WTC11 (cell line): ENCODE measurements at regions of chr1 and their contacts with region 1.

Region 1: DNA sequence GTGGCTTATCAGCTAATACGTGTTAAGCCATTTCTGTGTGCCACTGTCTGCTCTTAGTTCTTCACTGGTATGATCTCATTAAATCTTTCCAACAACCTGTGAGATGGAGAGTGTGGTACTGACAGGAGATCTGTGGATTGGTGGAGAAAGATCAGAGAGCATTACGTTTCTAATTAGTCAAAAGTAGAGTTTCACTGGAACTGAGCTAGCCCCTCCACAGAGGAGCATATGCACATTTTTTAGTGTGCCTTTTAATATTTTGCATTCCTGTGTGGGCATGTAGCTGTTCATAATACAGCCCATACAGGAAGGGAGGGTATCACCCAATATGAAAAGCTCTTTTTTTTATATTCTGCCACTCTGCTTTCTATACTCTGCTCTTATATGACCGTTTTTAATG is 31.6 kb downstream of the UTS2 start:
- DNase-seq: no peak
- ATAC-seq: no peak
- H3K4me3 Mint-ChIP-seq: no peak overlapping the region
- H3K27ac Mint-ChIP-seq: no peak overlapping the region
- H3K4me1 Mint-ChIP-seq: no peaks in the 10 kb centered on the region
- H3K27me3 Mint-ChIP-seq: no peaks in the 10 kb centered on the region
- CTCF ChIP-seq: no peak

Region 2: GRCh38 chr1:7733276-7733675 is 88.0 kb before region 1 on chr1:
- CTCF ChIA-PET with region 1: no interaction called
- POLR2A ChIA-PET with region 1: no interaction called
- DNase-seq: no peak
- ATAC-seq: no peak
- H3K4me3 Mint-ChIP-seq: no peak overlapping the region
- H3K27ac Mint-ChIP-seq: no peak overlapping the region
- H3K4me1 Mint-ChIP-seq: peaks cover 3% of the 10 kb centered on the region
- H3K27me3 Mint-ChIP-seq: no peaks in the 10 kb centered on the region; the same call in 1 of the 2 replicates
- CTCF ChIP-seq: no peak

Region 3: GRCh38 chr1:7808253-7808844 is 12.9 kb before region 1 on chr1:
- CTCF ChIA-PET with region 1: interaction called, 12 read pairs
- POLR2A ChIA-PET with region 1: no interaction called
- DNase-seq: no peak
- ATAC-seq: peak; percentile 36; the same call in 1 of the 2 replicates
- H3K4me3 Mint-ChIP-seq: no peak overlapping the region
- H3K27ac Mint-ChIP-seq: no peak overlapping the region
- H3K4me1 Mint-ChIP-seq: no peaks in the 10 kb centered on the region
- H3K27me3 Mint-ChIP-seq: peaks cover 5% of the 10 kb centered on the region; the same call in 1 of the 2 replicates
- CTCF ChIP-seq: peak; percentile 49